Pancreas (tissue), 10 donors: ENCODE measurements at regions of chr19 and their contacts with region 1.

Region 1: GRCh38 chr19:50461066-50461875 is 15.0 kb upstream of the EMC10 start:
- DNase-seq: peak in 3 of 6 donors; percentile 33 to 79 (median 65)
- ATAC-seq: peak; percentile 84 to 97 (median 92)
- H3K4me3 ChIP-seq: no peak overlapping the region
- H3K27ac ChIP-seq: no peak overlapping the region
- H3K4me1 ChIP-seq: no peaks in the 10 kb centered on the region
- H3K27me3 ChIP-seq: peaks cover 0 to 7% (median 0%) of the 10 kb centered on the region in 4 donors
- CTCF ChIP-seq: peak; percentile 58 to 82 (median 80)

Region 2: DNA sequence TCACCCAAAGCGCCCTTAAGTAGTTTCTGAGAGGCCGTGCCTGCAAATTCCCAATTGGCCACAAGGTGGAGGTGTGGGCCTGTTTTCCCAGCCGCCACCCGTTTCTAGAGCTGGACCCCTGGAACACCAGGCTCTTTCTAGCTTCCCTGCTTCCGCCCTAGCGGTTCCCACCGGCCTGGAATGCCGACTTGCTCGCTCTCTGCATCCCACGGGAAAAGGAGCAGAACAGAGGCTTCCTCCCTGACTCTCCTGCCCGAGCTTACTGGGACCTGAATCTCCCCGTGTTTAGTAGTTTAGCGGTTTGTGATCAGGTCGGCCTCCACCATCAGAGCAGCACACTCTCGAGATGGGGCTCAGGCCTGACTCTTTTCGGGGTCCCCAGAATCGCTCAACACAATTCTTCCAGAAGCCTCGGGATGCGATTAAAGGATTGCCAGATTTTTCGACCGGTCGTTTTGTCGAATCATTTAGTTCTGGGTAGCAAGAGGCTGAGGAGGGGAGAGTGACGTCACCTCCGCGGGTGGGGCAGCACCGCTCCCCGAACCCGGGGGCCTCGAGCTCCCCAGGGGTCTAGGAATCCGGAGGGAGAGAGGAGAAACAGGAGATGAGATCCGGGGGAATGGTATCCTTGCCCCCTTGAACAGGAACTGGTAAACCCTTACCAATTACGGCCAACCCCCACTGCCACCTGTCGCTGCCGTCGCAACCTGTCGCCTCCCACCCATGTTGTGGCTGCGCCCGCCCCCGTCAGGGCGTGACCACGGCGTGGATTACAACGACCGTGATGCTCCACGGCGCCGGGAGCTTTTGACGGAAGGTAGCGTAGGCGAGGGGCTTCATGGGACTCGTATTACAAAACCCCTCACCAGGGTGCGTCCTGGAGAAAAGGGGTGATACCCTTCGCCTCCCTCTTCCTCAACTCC is 103.8 kb before region 1 on chr19:
- intact Hi-C with region 1: loop called in 2 of 3 experiments (anchors 5 to 10 kb)
- DNase-seq: peak; percentile 67 to 88 (median 83)
- ATAC-seq: peak; percentile 76 to 90 (median 86)
- H3K4me3 ChIP-seq: peak overlapping the region; percentile 23 to 53 (median 42)
- H3K27ac ChIP-seq: peak overlapping the region; percentile 73 to 89 (median 85)
- H3K4me1 ChIP-seq: no peaks in the 10 kb centered on the region
- H3K27me3 ChIP-seq: no peaks in the 10 kb centered on the region
- CTCF ChIP-seq: peak; percentile 71 to 81 (median 77)

Region 3: DNA sequence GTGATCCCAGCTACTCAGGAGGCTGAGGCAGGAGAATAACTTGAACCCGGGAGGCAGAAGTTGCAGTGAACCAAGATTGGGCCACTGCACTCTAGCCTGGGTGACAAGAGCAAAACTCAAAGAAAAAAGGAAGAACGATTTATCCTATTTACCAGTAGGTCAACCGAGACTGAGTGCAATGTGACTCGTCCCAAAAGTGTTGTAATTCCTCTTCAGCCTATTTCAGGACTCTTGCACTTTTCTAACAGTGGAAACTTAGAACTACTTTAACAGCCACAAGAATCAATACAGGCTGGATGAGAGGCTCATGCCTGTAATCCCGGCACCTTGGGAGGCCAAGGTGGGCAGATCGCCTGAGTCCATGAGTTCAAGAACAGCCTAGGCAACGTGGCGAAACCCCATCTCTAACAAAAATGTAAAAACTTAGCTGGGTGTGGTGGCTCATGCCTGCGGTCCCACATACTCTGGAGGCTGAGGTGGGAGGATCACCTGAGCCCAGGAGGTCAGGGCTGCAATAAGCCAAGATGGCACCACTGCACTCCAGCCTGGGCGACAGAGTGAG is 89.3 kb before region 1 on chr19:
- intact Hi-C with region 1: loop called in 1 of 3 experiments (anchors 5 kb)
- DNase-seq: no peak
- ATAC-seq: no peak
- H3K4me3 ChIP-seq: no peak overlapping the region
- H3K27ac ChIP-seq: no peak overlapping the region
- H3K4me1 ChIP-seq: no peaks in the 10 kb centered on the region
- H3K27me3 ChIP-seq: no peaks in the 10 kb centered on the region
- CTCF ChIP-seq: no peak

Region 4: DNA sequence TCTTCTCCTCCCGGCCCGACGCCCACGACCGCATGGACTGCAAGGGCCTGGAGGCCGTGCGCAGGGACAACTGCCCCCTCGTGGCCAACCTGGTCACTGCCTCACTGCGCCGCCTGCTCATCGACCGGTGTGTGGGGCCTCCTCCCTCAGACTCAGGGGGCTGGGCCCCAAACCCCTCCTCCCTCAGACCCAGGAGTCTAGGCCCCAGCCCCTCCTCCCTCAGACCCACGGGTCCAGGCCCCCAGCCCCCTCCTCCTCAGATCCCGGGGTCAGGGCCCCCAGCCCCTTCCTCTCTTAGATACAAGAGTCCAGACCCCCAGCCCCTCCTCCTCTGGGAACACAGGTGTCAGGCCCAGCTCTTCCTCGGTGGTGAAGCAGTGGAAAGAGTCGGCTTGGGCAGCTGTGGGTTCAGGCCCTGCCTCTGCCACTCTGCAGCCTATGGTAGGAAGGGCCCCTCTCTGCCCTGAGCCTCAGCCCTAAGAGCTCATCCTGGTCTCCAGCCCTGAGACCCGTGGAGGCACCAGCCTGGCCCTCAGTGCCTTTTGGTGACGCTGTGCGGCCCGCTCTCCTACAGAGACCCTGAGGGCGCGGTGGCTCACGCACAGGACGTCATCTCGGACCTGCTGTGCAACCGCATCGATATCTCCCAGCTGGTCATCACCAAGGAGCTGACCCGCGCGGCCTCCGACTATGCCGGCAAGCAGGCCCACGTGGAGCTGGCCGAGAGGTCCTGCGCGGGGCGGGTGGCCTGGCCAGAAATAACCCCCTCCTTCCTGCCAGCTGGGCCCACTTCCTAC is 46.2 kb before region 1 on chr19:
- intact Hi-C with region 1: no loop called
- DNase-seq: peak; percentile 50 to 94 (median 80)
- ATAC-seq: peak; percentile 56 to 75 (median 68)
- H3K4me3 ChIP-seq: no peak overlapping the region
- H3K27ac ChIP-seq: no peak overlapping the region
- H3K4me1 ChIP-seq: peaks cover 0 to 12% (median 7%) of the 10 kb centered on the region in 3 donors
- H3K27me3 ChIP-seq: no peaks in the 10 kb centered on the region
- CTCF ChIP-seq: peak; percentile 84 to 91 (median 90)

Region 5: GRCh38 chr19:50568321-50569075 is 107.2 kb after region 1 on chr19 and contains the start of gene LRRC4B:
- intact Hi-C with region 1: no loop called
- DNase-seq: no peak
- ATAC-seq: no peak
- H3K4me3 ChIP-seq: no peak within 1 kb of the TSS
- H3K27ac ChIP-seq: no peak within 1 kb of the TSS
- H3K4me1 ChIP-seq: no peaks in the 10 kb centered on the region
- H3K27me3 ChIP-seq: peaks cover 0 to 2% (median 0%) of the 10 kb centered on the region in 4 donors
- CTCF ChIP-seq: no peak
- total RNA-seq, gene LRRC4B: 0.09 to 0.79 (median 0.36) TPM